Sigmoid colon (tissue), 7 donors: ENCODE measurements at regions of chr10 and their contacts with region 1.

Region 1: GRCh38 chr10:115801992-115802391 is 471.0 kb downstream of the GFRA1 start:
- DNase-seq: no peak
- H3K4me3 ChIP-seq: no peak overlapping the region
- H3K27ac ChIP-seq: no peak overlapping the region
- H3K4me1 ChIP-seq: no peaks in the 10 kb centered on the region
- H3K27me3 ChIP-seq: no peaks in the 10 kb centered on the region
- CTCF ChIP-seq: no peak
- EP300 ChIP-seq: no peak
- POLR2A ChIP-seq: no peak

Region 2: GRCh38 chr10:115948465-115948864 is 146.5 kb after region 1 on chr10:
- intact Hi-C with region 1: loop called (anchors 10 kb)
- DNase-seq: no peak
- H3K4me3 ChIP-seq: no peak overlapping the region
- H3K27ac ChIP-seq: no peak overlapping the region
- H3K4me1 ChIP-seq: peaks cover 0 to 14% (median 0%) of the 10 kb centered on the region in 4 donors
- H3K27me3 ChIP-seq: no peaks in the 10 kb centered on the region
- CTCF ChIP-seq: peak in 1 of 4 experiments; percentile 43
- EP300 ChIP-seq: no peak
- POLR2A ChIP-seq: no peak